Activated naive CD8-positive, alpha-beta T cell treated with anti-CD3 and anti-CD28 coated beads, Interleukin-2, amount 10 ng/mL, durations not matched to agents 7 days and 5 days (primary cell): ENCODE measurements at regions of chr1 and their contacts with region 1.

Region 1: GRCh38 chr1:13699936-13700520 is at the start of gene PRDM2:
- DNase-seq: peak; percentile 83
- ATAC-seq: peak; percentile 55
- H3K4me3 Mint-ChIP-seq: peak within 1 kb of the TSS; percentile 97
- H3K27ac Mint-ChIP-seq: peak within 1 kb of the TSS; percentile 98
- H3K4me1 Mint-ChIP-seq: peaks cover 29% of the 10 kb centered on the region
- H3K27me3 Mint-ChIP-seq: no peaks in the 10 kb centered on the region
- total RNA-seq, gene PRDM2: 75.2 to 79.8 TPM

Region 2: DNA sequence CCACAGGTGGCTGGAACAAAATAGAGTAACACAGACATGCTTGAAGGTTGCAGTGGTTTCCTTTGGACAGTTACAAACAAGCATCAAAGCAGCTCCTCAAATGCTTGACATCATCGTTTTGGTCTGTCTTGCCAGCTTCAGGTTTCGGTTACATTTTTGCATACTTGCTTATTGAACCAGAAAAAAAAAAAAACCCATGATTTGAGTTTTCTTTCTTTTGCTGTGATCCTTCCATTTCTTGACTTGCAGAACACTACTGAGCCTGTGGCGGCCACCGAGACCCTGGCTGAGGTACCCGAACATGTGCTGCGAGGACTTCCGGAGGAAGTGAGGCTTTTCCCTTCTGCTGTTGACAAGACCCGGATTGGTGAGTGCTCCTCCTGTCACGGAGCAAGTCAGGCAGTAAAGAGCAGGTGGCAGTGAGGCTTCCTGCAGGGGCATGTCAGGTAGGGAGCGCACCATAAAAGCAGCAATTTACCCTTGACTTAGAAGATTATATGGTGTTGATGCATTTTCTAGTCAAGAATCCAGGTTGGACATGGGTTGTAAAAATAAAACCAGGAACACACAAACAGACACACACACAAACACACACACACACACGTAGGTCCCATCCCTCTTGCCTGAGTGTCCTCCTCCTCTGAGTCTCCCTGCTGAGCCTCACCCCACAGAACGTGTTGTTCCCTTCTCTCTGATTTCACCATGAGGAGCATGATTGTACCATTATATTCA is 30.9 kb after region 1 on chr1:
- POLR2A ChIA-PET with region 1: interaction called, 13 read pairs
- DNase-seq: peak; percentile 76
- ATAC-seq: peak; percentile 91
- H3K4me3 Mint-ChIP-seq: peak overlapping the region; percentile 90
- H3K27ac Mint-ChIP-seq: peak overlapping the region; percentile 100
- H3K4me1 Mint-ChIP-seq: peaks cover 59% of the 10 kb centered on the region
- H3K27me3 Mint-ChIP-seq: no peaks in the 10 kb centered on the region